SK-N-SH (cell line): ENCODE measurements at regions of chr7 and their contacts with region 1.

Region 1: DNA sequence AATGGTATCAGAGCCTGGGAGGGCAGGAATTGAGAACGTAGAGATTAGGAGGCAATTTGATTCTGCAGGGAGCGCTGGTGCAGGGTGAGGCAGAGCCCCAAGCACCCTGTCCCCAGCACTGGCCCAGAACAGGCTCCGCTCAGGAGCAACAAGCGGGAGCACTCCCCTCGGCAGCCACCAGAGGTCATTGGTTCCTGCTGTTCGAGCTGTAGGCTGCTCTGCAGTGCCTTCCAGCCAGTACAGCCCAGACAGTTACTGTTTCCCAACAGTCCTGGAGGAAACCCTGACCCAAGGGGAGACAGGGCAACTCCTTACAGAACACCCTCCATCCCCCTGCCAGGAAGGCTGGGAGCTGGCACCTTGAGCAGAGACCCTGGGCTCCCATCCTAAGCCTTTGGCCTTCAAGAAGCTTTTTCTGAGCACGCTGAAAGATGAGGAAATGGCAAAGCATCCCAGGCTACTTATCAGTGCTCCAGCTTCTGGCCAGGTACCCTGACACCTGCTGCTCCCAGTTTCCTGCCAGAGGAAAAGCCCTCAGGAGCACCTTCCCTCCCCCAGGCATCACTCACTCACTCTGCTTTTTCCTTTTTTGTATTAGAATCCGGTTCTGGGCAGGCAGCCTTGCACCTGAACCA is 71.2 kb upstream of the EFCAB10 start:
- DNase-seq: peak; percentile 91
- H3K4me3 ChIP-seq: no peak overlapping the region
- H3K27ac ChIP-seq: no peak overlapping the region
- H3K4me1 ChIP-seq: peaks cover 22 to 36% of the 10 kb centered on the region in 2 experiments
- H3K27me3 ChIP-seq: no peaks in the 10 kb centered on the region
- CTCF ChIP-seq: peak; percentile 93
- EP300 ChIP-seq: no peak
- RAD21 ChIP-seq: peak; percentile 97

Region 2: GRCh38 chr7:105664816-105665525 is 12.5 kb after region 1 on chr7:
- CTCF ChIA-PET with region 1: interaction called, 23 read pairs
- POLR2A ChIA-PET with region 1: no interaction called
- DNase-seq: peak; percentile 60
- H3K4me3 ChIP-seq: no peak overlapping the region
- H3K27ac ChIP-seq: no peak overlapping the region
- H3K4me1 ChIP-seq: peaks cover 5 to 9% of the 10 kb centered on the region in 2 experiments; a peak in 2 of 4 replicates
- H3K27me3 ChIP-seq: no peaks in the 10 kb centered on the region
- CTCF ChIP-seq: no peak
- EP300 ChIP-seq: no peak
- RAD21 ChIP-seq: no peak

Region 3: GRCh38 chr7:105748701-105749100 is 96.2 kb after region 1 on chr7:
- CTCF ChIA-PET with region 1: interaction called, 15 read pairs
- POLR2A ChIA-PET with region 1: no interaction called
- DNase-seq: no peak
- H3K4me3 ChIP-seq: no peak overlapping the region
- H3K27ac ChIP-seq: no peak overlapping the region
- H3K4me1 ChIP-seq: no peaks in the 10 kb centered on the region
- H3K27me3 ChIP-seq: no peaks in the 10 kb centered on the region
- CTCF ChIP-seq: no peak
- EP300 ChIP-seq: no peak
- RAD21 ChIP-seq: no peak

Region 4: DNA sequence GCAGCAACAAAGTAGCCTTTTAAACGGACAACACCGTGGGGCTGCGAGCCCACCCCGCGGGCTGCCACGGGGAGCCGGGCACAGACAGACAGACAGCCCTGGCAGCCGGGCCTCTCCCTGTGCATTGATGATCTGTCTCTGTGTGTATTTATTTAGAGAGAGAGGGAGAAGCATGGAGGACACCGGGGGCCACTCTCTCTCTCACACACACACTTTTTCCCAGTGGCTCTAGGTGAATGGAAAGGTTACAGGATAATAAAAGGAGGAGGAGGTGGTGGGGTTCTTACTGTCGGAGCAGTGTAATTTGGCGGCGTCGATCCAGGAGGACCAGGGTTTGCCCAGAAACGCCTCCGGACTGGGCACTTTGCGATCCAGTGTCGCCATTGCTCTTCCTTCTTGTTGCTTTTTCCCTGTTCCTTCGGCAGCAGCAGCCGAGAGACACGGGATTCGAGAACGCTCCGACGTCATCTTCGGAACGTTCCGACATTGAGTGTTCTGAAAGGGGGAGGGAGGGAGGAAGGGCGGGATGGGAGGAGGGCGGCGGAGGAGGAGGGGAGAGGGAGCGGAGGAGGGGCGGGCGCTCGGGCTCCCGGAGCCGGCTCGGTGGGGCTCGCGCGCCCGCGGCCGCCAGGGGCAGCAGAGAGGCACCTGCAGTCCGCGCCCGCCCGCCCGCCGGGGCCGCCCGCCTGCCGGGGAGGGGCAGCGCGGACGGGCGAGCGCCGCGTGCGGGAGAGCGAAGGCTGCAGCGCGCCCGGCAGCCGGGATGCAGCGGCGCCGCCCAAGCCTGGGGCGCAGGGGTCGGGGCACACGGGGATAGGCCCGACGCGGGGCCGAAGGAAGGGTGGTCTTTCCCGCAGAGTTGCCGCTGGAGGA is 223.9 kb after region 1 on chr7 and contains the start of gene ATXN7L1:
- CTCF ChIA-PET with region 1: interaction called, 11 read pairs
- POLR2A ChIA-PET with region 1: no interaction called
- DNase-seq: peak; percentile 98
- H3K4me3 ChIP-seq: peak within 1 kb of the TSS; percentile 86 to 90
- H3K27ac ChIP-seq: peak within 1 kb of the TSS; percentile 84 to 96
- H3K4me1 ChIP-seq: peaks cover 0 to 45% of the 10 kb centered on the region in 2 experiments; a peak in 3 of 4 replicates
- H3K27me3 ChIP-seq: no peaks in the 10 kb centered on the region
- CTCF ChIP-seq: peak; percentile 37
- EP300 ChIP-seq: peak in 1 of 2 experiments; percentile 4; a peak in 2 of 4 replicates
- RAD21 ChIP-seq: peak; percentile 36
- polyA plus RNA-seq, gene ATXN7L1: 6.0 and 6.2 TPM in 2 replicates

Region 5: GRCh38 chr7:106009403-106010226 is 357.1 kb after region 1 on chr7:
- CTCF ChIA-PET with region 1: interaction called, 13 read pairs
- POLR2A ChIA-PET with region 1: no interaction called
- DNase-seq: peak; percentile 91
- H3K4me3 ChIP-seq: no peak overlapping the region; a peak in 1 of 4 replicates
- H3K27ac ChIP-seq: peak overlapping the region in 1 of 2 experiments; percentile 7; a peak in 1 of 4 replicates
- H3K4me1 ChIP-seq: peaks cover 8 to 24% of the 10 kb centered on the region in 2 experiments
- H3K27me3 ChIP-seq: no peaks in the 10 kb centered on the region
- CTCF ChIP-seq: peak; percentile 99
- EP300 ChIP-seq: 0 out of 4 replicates have a peak, but pooled peaks have one; percentile 26 to 36
- RAD21 ChIP-seq: peak; percentile 83

Region 6: GRCh38 chr7:106056513-106057203 is 404.2 kb after region 1 on chr7:
- CTCF ChIA-PET with region 1: interaction called, 10 read pairs
- POLR2A ChIA-PET with region 1: no interaction called
- DNase-seq: peak; percentile 88
- H3K4me3 ChIP-seq: no peak overlapping the region
- H3K27ac ChIP-seq: peak overlapping the region in 1 of 2 experiments; percentile 96; a peak in 2 of 4 replicates
- H3K4me1 ChIP-seq: peaks cover 0 to 28% of the 10 kb centered on the region in 2 experiments; a peak in 2 of 4 replicates
- H3K27me3 ChIP-seq: no peaks in the 10 kb centered on the region
- CTCF ChIP-seq: peak; percentile 95
- EP300 ChIP-seq: 0 out of 4 replicates have a peak, but pooled peaks of 1 of the 2 experiments have one; percentile 26
- RAD21 ChIP-seq: peak; percentile 100